ENCODE measurements at regions of chr17 and their contacts with region 1.

Region 1: DNA sequence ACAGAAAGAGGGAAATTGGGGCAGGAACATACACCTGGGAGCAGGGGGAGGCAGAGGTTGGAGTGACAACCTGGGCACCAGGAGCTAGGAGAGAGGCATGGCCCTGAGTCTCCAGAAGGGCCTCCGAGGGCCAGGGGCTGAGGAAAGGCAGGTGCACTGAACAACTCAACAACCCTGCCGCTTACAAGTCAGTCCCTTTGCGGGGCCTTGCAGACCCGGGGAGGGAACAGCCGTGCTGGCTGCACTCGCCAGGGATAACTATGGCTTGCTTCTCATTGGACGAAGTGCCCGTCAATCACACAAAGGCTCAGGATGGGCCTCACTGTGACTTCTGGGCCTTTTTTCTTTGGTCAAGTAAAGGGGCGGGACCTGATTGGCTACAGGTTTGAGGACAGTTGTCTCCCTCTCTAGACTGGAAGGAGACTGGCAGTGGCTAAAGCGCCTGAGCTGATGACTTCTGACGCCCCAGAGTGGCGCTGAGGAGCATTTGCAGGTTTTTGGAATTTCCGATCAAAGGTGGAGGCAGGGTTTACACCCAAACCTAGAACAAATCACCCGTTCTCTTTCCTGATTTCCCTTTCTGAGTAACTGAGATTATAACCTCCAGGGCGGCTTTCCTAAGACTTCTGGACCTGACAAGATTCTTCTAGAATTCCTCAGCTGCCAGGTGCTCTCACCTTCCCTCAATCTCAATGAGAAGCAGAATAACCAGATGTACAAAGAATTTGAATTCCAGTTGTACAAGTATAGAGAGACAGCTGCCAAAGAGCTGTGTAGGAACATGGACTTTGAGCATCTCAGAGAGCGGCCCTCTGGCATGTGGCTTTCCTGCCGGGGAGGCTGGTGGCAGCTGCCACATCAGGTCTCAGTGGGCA is 27.6 kb upstream of the ST6GALNAC2 start:
- DNase-seq: peak; percentile 72
- H3K4me3 ChIP-seq: no peak overlapping the region
- H3K27ac ChIP-seq: no peak overlapping the region
- H3K4me1 ChIP-seq: peaks cover 3% of the 10 kb centered on the region
- H3K27me3 ChIP-seq: no peaks in the 10 kb centered on the region
- CTCF ChIP-seq: peak; percentile 37 to 77

Region 2: DNA sequence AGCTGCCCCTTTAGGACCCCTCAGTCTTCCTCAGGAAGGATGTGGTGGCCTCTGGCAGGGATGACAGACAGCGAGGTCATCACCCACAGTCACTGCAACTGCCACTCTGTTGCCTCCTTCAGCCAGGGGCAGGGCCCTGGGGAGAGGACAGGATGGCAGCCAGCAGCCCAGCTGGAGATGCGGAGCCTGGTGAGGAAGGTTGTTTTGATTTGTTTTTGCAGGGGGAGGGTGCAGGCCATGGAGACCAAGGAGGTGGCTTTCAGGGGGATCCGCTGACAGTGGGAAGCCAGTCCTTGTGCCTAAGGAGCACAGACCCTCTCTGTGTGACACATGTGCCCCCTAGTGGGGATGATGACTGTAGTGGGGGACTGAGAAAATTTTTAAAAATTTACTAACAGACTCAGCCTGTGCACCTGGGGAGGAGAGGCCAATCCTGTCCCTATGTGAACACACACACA is 66.0 kb before region 1 on chr17:
- CTCF ChIA-PET with region 1: interaction called, 3 read pairs
- dilution Hi-C with region 1: loop called (anchors 5 kb)
- in situ Hi-C with region 1: no loop called
- intact Hi-C with region 1: no loop called
- DNase-seq: no peak
- H3K4me3 ChIP-seq: no peak overlapping the region
- H3K27ac ChIP-seq: peak overlapping the region; percentile 68
- H3K4me1 ChIP-seq: peaks cover 56% of the 10 kb centered on the region
- H3K27me3 ChIP-seq: no peaks in the 10 kb centered on the region
- CTCF ChIP-seq: peak; percentile 48 to 73

Region 3: DNA sequence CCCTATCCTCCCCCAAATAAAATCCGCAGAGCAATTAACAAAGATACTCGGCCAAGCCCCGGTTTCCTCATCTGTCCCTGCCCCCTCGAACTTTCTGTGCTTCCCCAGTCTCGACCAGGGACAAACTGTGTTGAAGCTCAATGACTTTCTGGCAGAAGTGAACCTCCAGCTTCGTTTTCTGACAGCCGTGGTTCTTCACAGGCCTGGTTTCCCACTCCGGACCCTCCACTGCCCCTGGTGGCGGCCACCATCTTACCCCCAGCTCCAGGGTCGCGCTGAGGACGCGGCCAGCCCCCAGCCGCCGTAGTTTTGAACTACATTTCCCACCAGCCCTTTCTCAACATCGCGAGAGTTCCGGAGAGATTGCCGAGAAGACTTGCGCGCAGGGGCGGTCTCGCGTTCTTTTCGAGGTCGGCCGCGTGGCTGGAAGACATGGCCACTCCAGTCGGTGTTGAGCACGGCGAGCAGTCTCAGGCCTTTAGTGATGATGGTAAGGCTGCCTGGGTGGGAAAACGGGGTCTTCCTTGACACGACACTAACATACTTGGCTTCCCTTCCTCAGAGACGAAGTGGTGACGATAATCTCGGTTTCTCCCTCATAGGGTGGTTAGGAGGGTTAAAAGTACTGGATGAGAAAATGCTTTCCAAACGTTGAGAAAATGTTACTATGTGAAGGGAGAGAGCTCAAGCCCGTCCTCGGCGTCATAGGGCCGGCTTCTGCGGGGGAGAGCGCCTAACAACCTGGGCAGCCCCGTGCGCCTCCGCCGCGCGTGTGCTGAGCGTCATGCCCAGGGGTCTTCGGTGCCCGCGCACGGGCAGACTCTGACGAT is 55.6 kb before region 1 on chr17:
- CTCF ChIA-PET with region 1: no interaction called
- dilution Hi-C with region 1: no loop called
- in situ Hi-C with region 1: no loop called
- intact Hi-C with region 1: loop called (anchors 1 kb)
- DNase-seq: peak; percentile 93
- H3K4me3 ChIP-seq: peak overlapping the region; percentile 61 to 89 (median 86)
- H3K27ac ChIP-seq: peak overlapping the region; percentile 95
- H3K4me1 ChIP-seq: peaks cover 54% of the 10 kb centered on the region
- H3K27me3 ChIP-seq: no peaks in the 10 kb centered on the region
- CTCF ChIP-seq: peak; percentile 36 to 54

Region 4: DNA sequence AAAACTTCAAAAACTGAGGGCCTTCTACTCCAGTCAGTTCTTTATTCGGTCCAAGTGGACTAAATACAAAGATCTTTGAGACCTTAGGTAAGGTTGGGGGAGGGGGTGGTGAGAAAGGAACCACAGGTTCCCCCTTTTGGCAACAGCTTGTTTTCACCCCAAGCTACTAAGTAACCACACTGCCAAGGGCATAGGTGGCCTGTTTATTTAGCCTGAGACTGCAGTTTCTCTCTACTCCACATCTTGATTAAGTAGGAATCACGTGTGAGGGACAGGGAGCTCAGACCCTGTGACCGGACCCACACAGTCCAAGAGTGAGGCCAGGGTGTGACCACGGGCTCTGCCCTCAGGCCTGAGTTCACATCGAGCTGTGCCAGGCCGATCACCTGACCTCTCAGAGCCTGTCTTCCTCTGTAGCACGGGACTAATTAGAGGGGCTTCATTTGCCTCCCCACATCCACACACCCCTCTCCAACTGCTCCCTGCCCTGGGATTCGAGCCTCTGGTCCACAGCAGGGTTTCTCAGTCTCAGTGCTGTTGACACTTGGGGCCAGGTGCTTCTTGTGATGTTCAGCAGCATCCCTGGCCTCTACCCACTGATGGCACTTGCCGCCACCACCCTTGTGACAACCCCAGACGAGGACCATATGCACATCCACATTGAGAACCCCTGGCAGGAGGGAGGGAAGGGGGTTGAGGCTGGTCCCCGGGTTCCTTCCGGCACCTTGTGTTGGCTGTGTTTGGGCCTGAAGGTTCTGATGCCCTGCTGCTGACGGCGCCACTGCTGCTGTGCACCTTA is 45.4 kb before region 1 on chr17:
- CTCF ChIA-PET with region 1: no interaction called
- dilution Hi-C with region 1: no loop called
- in situ Hi-C with region 1: no loop called
- intact Hi-C with region 1: loop called (anchors 1 kb)
- DNase-seq: no peak
- H3K4me3 ChIP-seq: no peak overlapping the region
- H3K27ac ChIP-seq: no peak overlapping the region
- H3K4me1 ChIP-seq: peaks cover 2% of the 10 kb centered on the region
- H3K27me3 ChIP-seq: no peaks in the 10 kb centered on the region
- CTCF ChIP-seq: no peak

Region 5: DNA sequence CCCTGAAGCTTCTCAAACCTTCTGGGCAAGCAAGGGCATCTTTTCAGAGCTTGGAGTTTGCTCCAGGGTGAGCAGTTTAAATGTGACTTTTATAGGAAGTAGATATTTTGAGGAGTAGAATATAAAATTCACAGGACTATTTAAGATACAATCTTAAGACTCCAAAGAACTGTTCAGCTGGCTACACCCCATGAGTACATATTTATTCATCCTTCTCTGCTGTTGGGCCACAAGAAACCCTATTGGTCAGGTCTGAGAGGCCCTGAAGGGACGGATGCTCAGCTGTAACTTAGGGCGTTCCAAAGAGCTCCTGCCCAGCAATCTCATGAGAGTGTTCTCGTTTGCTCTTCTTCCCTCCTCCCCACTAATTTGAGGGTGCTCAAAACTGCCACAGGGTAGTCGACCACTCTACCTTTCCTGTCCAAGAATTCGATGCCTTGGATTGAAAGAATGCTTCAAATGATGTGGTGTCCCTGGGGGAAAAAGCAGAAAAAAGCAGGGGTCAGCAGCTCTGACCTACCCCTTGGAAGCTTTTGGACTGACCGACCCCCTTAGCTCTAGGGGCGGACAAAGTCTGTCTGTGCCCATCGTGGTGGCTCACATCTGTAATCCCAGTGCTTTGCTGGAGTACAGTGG is 34.8 kb before region 1 on chr17:
- CTCF ChIA-PET with region 1: no interaction called
- dilution Hi-C with region 1: no loop called
- in situ Hi-C with region 1: no loop called
- intact Hi-C with region 1: loop called (anchors 1 kb)
- DNase-seq: peak; percentile 84
- H3K4me3 ChIP-seq: no peak overlapping the region
- H3K27ac ChIP-seq: peak overlapping the region; percentile 52
- H3K4me1 ChIP-seq: peaks cover 54% of the 10 kb centered on the region
- H3K27me3 ChIP-seq: no peaks in the 10 kb centered on the region
- CTCF ChIP-seq: no peak

Region 6: DNA sequence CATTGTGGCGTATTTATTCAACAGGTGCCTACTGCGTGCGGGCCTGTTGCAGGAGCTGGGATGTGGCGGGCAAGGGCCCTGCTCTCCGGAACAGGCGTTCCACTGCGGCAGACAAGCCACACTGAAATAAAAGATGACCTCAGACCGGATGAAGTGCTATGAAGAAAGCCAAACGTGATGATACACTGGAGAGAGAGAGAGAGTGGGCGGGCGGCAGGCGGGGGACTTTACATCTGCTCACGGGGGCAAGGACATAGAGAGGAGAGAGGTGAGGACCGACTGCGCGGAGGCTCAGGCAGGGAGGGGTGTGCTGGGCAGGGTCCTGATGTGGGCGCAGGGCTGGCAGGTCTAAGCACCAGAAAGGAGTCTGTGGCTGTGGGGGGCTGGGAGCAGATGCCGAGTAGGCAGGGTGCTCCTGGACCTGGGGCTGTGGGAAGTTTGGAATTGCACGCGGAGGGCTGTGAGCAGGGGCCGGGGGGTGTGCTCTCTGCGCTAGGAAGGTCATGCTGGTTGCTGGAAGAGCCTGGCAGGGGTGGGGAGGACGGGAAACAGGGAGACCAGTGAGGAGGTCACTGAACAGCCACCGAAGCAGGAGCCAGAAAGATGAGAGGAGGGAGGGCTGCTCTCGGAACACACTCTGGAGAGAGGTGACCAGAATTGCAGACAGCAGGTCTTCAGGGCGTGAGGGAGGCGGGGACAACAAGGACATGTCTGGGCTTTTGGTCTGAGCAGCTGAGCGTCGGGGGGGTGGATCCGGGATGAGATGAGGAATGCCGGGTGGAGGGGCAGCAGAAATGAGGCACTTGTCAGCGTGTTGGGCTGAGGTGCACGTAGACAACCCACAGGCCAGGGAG is 87.6 kb after region 1 on chr17:
- CTCF ChIA-PET with region 1: interaction called, 20 read pairs
- dilution Hi-C with region 1: no loop called
- in situ Hi-C with region 1: no loop called
- intact Hi-C with region 1: no loop called
- DNase-seq: peak; percentile 82
- H3K4me3 ChIP-seq: peak overlapping the region in 2 of 3 experiments; percentile 27 to 32
- H3K27ac ChIP-seq: peak overlapping the region; percentile 43
- H3K4me1 ChIP-seq: peaks cover 29% of the 10 kb centered on the region
- H3K27me3 ChIP-seq: no peaks in the 10 kb centered on the region
- CTCF ChIP-seq: no peak

Region 7: DNA sequence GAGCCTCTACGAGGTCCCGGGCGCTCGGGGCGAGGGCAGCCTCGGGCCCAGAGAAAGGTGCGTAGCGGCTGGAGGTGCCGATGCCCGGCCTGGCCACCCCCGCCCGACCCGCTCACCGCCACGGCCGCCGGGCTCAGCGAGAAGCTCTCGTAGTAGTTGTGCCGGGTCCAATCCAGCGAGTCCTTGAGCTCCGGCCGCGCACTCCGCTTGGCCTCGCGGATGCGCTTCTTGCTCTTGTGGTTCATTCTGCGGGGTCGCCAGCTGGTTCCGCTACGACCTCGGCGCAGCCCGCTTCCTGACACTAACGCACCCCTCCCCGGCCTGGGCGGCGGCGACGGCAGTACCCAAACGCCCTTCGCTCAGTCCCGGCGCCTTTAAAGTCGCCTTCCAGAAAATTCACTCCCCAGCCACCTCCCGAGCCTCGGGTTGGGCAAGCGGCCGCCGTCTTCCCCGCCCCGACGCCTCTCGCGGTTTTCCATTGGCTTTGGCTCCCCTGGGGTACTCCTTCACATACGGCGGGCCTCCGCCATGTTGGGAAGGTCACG is 113.1 kb after region 1 on chr17 and contains the start of gene JMJD6:
- CTCF ChIA-PET with region 1: no interaction called
- dilution Hi-C with region 1: no loop called
- in situ Hi-C with region 1: no loop called
- intact Hi-C with region 1: no loop called
- DNase-seq: peak; percentile 97
- H3K4me3 ChIP-seq: peak within 1 kb of the TSS; percentile 86 to 97 (median 96)
- H3K27ac ChIP-seq: peak within 1 kb of the TSS; percentile 84
- H3K4me1 ChIP-seq: peaks cover 8% of the 10 kb centered on the region
- H3K27me3 ChIP-seq: no peaks in the 10 kb centered on the region
- CTCF ChIP-seq: no peak
- total RNA-seq, gene JMJD6: 10.3 to 22.2 TPM